Tibial artery (tissue), 4 donors: ENCODE measurements at regions of chr12 and their contacts with region 1.

Region 1: DNA sequence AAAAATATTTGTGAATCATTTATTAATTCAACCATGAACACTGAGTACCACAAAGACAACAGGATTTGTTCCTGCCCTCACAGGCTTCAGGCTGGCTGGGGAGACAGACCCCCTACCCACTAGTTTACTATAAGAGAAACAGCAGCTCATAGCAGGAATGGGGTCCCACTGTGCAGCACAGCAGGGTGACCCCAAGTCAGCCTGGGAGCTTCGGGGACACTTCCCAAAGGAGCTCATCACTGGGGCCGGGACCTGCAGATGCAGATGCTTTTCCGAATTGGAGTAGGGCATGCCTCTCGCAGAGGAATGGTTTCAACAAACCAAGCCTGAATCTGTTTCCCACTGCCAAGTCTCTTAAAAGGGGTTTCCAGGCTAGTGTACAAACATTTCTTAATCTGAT is 176.2 kb upstream of the PWP1 start:
- DNase-seq: no peak
- H3K4me3 ChIP-seq: no peak overlapping the region
- H3K27ac ChIP-seq: no peak overlapping the region
- H3K4me1 ChIP-seq: no peaks in the 10 kb centered on the region
- H3K27me3 ChIP-seq: no peaks in the 10 kb centered on the region
- CTCF ChIP-seq: no peak

Region 2: DNA sequence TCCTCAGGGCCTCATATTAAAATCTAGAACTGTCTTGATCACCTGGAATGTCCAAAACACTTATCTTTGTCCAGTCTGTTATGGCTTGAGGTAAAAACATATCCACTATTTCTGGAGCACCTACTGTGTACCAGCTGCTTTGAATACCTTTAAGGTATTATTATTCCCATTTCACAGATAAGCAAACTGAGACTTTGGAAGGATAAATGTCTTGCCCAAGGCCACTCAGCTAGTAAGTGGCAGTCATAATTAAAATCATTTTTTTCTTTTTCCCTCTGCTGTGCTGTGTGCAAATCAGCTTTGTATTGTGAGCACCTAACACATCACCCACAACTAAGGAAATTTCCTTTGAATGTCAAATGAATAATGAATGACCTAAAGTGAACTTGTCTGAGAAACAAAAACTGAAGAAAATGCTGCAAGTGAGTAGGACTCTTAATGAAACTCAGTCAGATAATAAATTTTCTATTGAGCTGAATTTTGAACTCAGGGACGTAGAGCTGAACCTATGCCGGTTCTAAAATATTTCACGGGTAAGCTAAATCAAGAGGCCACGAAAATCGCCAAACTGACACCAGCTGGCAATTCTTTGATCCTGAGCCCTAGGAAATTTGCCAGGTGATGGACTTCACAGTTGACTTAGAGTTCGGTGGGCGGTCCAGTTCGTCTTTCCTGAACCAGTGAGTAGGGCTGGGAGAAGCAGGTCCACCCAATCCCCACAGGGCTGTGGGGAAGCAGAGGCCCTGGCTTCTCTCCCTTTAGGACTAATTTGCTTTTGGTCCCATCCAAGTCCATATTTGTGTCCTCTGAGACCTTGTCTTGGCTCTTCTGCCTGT is 16.5 kb after region 1 on chr12:
- intact Hi-C with region 1: loop called (anchors 1 kb)
- DNase-seq: no peak
- H3K4me3 ChIP-seq: no peak overlapping the region
- H3K27ac ChIP-seq: no peak overlapping the region
- H3K4me1 ChIP-seq: no peaks in the 10 kb centered on the region
- H3K27me3 ChIP-seq: no peaks in the 10 kb centered on the region
- CTCF ChIP-seq: no peak

Region 3: GRCh38 chr12:107545737-107546353 is 36.4 kb after region 1 on chr12:
- intact Hi-C with region 1: no loop called
- DNase-seq: no peak
- H3K4me3 ChIP-seq: no peak overlapping the region
- H3K27ac ChIP-seq: no peak overlapping the region
- H3K4me1 ChIP-seq: no peaks in the 10 kb centered on the region
- H3K27me3 ChIP-seq: no peaks in the 10 kb centered on the region
- CTCF ChIP-seq: no peak

Region 4: DNA sequence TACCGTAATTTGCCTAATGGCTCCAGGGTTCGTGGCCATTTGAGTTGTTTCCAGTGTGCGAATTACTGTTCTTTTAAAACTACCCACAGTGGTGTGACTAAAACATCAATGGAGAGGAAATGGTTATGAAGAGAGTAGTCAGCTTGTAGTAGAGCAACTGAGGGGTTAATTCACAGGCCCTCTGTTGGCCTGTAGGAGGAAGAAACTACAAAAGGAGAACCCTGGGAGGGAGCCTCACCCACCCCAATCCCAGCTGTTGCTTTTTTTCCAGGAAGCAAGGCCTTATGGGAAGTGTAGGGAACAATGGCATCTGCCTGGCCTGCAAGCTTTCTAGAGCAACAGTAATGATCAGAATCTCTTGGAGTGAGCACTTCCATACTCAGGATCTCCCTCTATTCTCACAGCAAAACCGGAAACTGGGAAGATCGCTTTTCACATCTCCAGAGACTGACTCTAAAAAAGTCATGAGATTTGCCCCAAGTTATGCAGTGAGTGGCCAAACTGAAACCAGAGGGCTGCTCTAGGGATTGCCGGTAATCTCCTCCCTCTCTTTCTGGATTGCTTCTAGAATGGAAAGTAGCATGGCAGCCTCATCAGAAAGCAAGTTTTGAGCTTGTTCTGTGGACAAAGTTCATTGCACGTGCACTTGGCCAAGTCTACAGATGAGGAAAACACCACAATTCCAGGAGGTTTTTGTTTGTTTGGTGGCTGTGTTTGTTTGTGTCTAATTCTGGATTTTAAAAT is 50.9 kb after region 1 on chr12:
- intact Hi-C with region 1: no loop called
- DNase-seq: no peak
- H3K4me3 ChIP-seq: no peak overlapping the region
- H3K27ac ChIP-seq: no peak overlapping the region
- H3K4me1 ChIP-seq: no peaks in the 10 kb centered on the region
- H3K27me3 ChIP-seq: no peaks in the 10 kb centered on the region
- CTCF ChIP-seq: no peak

Region 5: GRCh38 chr12:107570721-107571120 is 61.3 kb after region 1 on chr12:
- intact Hi-C with region 1: no loop called
- DNase-seq: no peak
- H3K4me3 ChIP-seq: no peak overlapping the region
- H3K27ac ChIP-seq: no peak overlapping the region
- H3K4me1 ChIP-seq: no peaks in the 10 kb centered on the region
- H3K27me3 ChIP-seq: no peaks in the 10 kb centered on the region
- CTCF ChIP-seq: no peak

Region 6: GRCh38 chr12:108080363-108080762 is 570.9 kb after region 1 on chr12:
- intact Hi-C with region 1: no loop called
- DNase-seq: no peak
- H3K4me3 ChIP-seq: no peak overlapping the region
- H3K27ac ChIP-seq: no peak overlapping the region
- H3K4me1 ChIP-seq: no peaks in the 10 kb centered on the region
- H3K27me3 ChIP-seq: peaks cover 0 to 9% of the 10 kb centered on the region in 2 donors
- CTCF ChIP-seq: no peak